ENCODE measurements at regions of chr19 and their contacts with region 1.

Region 1: DNA sequence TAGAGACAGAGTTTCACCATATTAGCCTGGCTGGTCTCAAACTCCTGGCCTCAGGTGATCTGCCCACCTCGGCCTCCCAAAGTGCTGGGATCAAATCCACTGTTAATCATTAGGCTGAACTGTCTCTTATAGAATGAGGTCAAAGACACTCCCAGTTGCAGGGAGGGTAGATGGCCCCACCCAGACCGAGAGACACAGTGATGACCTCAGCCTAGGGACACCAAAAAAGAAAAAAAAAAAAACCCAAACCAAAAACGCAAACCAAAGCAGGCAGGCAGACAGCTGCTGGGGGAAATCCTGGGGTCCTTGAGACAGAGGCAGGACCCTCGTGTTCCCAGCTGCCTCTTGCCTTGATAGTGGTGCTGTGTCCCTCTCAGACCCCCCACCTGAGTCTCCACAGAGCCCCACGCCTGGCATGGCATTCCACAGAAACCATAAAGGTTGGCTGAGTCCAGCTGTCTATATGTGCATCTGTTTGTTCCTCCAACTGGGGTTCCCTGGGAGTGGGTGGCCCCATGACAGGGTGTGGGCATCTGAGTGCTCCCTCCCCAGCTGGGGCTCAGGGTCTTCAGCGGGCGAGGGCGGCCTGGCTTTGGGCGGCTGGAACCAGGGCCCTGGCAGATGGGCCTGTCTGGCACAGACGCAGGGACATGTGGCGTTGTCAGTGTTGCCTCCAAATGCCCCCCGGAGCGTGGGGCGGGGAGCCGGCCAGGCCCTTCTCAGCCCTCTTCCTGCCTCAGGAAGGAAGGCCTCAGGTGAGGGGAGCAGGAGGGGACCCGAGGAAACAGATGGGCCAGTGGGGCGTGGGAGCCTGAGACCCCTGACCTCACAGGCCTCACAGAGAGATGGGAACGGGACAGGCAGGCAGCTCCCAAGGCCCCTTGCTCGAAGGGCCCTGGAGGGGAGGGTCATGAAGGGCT is 5.2 kb downstream of the DAND5 start:
- DNase-seq: no peak
- H3K4me3 Mint-ChIP-seq: no peak overlapping the region
- H3K27ac Mint-ChIP-seq: no peak overlapping the region
- H3K4me1 Mint-ChIP-seq: no peaks in the 10 kb centered on the region
- H3K27me3 Mint-ChIP-seq: peaks cover 5% of the 10 kb centered on the region

Region 2: DNA sequence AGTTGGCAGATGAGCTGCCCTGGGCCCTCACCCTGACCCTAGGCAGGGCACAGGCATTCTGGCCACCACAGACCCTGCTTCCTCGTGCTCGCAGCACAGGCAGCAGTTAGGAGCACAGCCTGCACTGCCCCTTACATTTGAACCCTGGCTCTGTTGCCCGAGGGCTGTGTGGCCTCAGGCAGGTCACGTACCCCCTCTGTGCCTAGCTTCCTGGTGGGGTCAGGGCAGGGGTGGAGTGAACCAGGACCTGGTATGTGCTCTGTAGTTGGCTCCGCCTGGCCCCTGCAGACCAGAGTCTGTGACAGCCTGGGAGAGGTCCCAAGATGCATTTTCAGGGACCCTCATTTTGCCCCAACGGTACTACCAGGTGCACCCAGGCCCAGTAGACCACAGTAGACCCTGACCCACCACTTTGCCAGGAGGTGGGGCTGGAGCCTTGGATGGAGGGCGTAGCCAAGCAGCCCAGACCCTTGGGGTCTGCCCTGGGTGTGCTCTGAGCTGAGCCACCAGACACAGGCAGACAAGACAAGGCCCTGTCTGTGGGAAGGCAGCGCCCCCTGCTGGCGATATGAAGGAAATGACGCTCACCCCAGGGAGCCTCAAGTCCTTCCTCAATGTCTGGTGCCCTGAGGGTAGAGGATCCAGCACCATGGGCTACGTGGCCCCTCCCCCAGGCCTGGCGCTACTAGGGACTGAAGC is 119.0 kb after region 1 on chr19:
- CTCF ChIA-PET with region 1: interaction called, 67 read pairs
- POLR2A ChIA-PET with region 1: interaction called, 6 read pairs
- DNase-seq: peak; percentile 85
- H3K4me3 Mint-ChIP-seq: no peak overlapping the region
- H3K27ac Mint-ChIP-seq: no peak overlapping the region
- H3K4me1 Mint-ChIP-seq: peaks cover 30% of the 10 kb centered on the region
- H3K27me3 Mint-ChIP-seq: peaks cover 31% of the 10 kb centered on the region

Region 3: DNA sequence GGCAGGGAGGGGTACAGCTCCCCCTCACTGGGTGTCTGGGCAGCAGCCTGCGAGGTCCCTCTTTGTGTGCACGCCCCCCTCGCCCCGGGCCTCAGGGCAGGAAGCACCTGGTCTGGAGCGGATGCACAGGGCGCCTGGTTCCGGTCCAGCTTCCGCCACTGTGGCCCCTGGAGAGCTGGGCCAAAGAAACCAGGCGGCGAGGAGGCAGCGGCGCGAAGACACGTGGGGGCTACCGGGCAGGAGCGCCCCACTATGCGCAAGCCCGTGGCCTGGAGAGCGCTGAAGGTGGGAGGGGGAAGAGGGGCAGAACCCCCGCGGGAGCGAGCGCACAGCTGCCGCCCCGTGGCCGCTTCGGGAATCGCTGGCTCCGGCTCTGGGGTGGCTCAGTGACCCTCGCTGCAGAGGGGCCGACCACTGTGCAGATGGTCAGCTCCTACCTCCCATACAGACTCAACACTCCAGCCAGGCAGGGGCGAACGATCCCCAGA is 129.8 kb after region 1 on chr19:
- CTCF ChIA-PET with region 1: interaction called, 10 read pairs
- POLR2A ChIA-PET with region 1: no interaction called
- DNase-seq: peak; percentile 70
- H3K4me3 Mint-ChIP-seq: peak overlapping the region; percentile 90
- H3K27ac Mint-ChIP-seq: peak overlapping the region; percentile 89
- H3K4me1 Mint-ChIP-seq: peaks cover 45% of the 10 kb centered on the region
- H3K27me3 Mint-ChIP-seq: no peaks in the 10 kb centered on the region